MCF 10A (cell line): ENCODE measurements at regions of chr3 and their contacts with region 1.

Region 1: GRCh38 chr3:33779751-33780150 is 18.7 kb upstream of the PDCD6IP start:
- DNase-seq: no peak
- H3K4me3 Mint-ChIP-seq: no peak overlapping the region
- H3K27ac Mint-ChIP-seq: no peak overlapping the region
- H3K4me1 Mint-ChIP-seq: peaks cover 6% of the 10 kb centered on the region
- H3K27me3 Mint-ChIP-seq: no peaks in the 10 kb centered on the region
- CTCF ChIP-seq: no peak

Region 2: DNA sequence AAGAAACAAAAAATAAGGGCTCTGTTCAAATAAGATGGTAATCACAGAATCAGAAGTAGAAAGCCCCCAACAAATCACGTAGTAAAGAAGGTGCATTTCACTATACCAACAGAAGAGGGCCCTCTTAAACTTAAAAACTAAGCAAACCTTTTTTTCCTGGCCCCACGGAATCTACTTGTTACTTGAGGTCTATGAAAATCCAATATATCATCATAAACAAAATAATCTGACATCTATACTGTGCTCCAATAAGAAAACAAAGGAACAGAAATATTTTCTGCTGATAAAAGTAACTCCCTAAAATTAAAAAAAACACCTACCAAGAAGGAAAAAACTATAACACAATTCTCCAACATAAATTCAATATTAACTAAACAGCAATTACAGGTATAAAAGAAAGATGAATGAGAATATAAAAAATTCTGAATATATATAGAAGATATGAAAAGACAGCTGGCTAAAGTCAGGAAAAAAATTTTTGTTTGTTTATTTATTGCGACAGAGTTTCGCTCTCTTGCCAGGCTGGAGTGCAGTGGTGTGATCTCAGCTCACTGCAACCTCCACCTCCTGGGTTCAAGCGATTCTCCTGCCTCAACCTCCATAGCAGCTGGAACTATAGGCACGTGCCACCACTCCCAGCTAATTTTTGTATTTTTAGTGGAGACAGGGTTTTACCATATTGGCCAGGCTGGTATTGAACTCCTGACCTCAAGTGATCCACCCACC is 143.5 kb before region 1 on chr3:
- CTCF ChIA-PET with region 1: interaction called, 45 read pairs
- POLR2A ChIA-PET with region 1: interaction called, 6 read pairs
- intact Hi-C with region 1: loop called (anchors 1 kb)
- DNase-seq: peak; percentile 60
- H3K4me3 Mint-ChIP-seq: no peak overlapping the region
- H3K27ac Mint-ChIP-seq: peak overlapping the region; percentile 2
- H3K4me1 Mint-ChIP-seq: peaks cover 5% of the 10 kb centered on the region
- H3K27me3 Mint-ChIP-seq: no peaks in the 10 kb centered on the region
- CTCF ChIP-seq: peak; percentile 74